ENCODE measurements at regions of chr14 and their contacts with region 1.

Region 1: DNA sequence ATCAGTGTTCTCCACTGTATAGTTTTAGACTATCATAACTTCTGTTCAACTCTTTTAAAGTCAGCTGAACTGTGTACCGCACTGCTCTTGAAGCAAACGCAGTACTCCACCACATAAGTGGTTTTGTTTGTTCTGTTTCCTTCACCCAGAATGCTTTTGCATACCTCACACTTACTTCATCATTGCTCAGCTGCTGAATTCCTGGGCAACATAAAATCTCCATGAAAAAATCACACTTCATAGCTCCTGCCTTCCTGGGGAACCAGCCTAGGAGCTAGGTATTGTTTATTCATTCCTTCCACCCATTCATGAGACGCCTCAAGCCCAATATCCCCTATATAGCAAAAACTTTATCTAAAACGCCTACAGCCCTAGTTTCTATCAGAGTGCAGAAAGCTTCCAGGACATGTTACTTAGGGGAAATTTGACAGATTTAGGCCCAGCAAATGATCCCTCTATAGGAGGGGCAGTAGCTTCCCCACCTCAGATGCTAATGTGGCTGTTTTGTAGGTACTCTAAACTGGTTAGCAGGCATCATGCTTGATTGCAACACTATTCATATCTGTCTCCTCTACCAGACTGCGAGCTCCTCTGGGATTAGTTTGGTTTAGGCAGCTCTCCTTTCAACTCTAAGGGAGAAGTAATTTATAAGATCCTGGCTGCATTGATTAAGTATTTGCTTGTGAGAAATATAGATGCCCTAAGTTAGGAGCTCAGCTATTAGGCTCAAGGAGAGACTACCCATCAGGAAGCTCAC is 44.5 kb downstream of the LRRC9 start:
- DNase-seq: peak; percentile 8
- H3K4me3 Mint-ChIP-seq: peak overlapping the region; percentile 80
- H3K27ac Mint-ChIP-seq: no peak overlapping the region
- H3K4me1 Mint-ChIP-seq: peaks cover 23% of the 10 kb centered on the region
- H3K27me3 Mint-ChIP-seq: peaks cover 21% of the 10 kb centered on the region

Region 2: DNA sequence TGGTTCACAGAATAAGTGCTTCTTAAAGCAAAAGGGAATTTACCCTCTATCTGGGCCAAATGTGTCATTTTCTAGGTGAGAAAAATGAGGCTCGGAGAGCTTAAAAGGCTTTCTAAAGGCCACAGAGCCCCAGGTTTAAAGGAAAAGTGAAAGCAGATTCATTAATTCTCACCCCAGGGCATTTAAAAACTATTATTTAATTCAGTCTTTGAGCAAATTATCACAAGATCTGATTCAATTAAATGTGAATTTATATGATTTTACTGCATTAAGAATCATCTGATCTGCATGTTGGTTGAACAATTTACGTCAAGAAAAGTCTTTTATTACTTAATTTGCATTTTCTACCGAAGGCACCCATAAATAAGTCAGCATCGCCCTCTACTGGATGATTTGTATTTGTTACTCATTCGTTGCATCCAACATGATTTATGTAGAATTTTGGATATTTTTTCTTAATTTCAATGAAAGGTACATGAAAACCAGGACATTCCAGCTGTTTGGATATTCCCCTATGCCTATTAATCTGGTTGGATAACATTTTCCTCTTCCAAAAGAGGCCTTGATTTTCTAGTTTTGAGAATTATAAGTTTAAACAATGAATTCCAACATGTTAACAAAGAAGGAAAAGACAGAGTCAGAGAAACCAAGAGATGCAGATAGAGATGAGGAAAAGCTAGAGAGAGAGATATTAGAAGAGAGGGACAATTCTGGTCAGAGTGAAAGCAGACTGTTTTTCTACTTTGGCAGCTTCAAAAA is 219.9 kb after region 1 on chr14:
- CTCF ChIA-PET with region 1: interaction called, 19 read pairs
- POLR2A ChIA-PET with region 1: no interaction called
- DNase-seq: peak; percentile 66
- H3K4me3 Mint-ChIP-seq: peak overlapping the region; percentile 76
- H3K27ac Mint-ChIP-seq: peak overlapping the region; percentile 82
- H3K4me1 Mint-ChIP-seq: peaks cover 15% of the 10 kb centered on the region
- H3K27me3 Mint-ChIP-seq: no peaks in the 10 kb centered on the region